Esophagus muscularis mucosa (tissue), 4 donors: ENCODE measurements at regions of chr15 and their contacts with region 1.

Region 1: GRCh38 chr15:97759363-97759762 is 201.1 kb upstream of the ARRDC4 start:
- DNase-seq: no peak
- H3K4me3 ChIP-seq: no peak overlapping the region
- H3K27ac ChIP-seq: no peak overlapping the region
- H3K4me1 ChIP-seq: peaks cover 0 to 17% (median 13%) of the 10 kb centered on the region in 4 donors
- H3K27me3 ChIP-seq: no peaks in the 10 kb centered on the region
- CTCF ChIP-seq: no peak
- EP300 ChIP-seq: no peak
- POLR2A ChIP-seq: no peak

Region 2: GRCh38 chr15:97248376-97248775 is 511.0 kb before region 1 on chr15:
- intact Hi-C with region 1: loop called (anchors 10 kb)
- DNase-seq: no peak
- H3K4me3 ChIP-seq: no peak overlapping the region
- H3K27ac ChIP-seq: no peak overlapping the region
- H3K4me1 ChIP-seq: no peaks in the 10 kb centered on the region
- H3K27me3 ChIP-seq: no peaks in the 10 kb centered on the region
- CTCF ChIP-seq: no peak
- EP300 ChIP-seq: no peak
- POLR2A ChIP-seq: no peak

Region 3: DNA sequence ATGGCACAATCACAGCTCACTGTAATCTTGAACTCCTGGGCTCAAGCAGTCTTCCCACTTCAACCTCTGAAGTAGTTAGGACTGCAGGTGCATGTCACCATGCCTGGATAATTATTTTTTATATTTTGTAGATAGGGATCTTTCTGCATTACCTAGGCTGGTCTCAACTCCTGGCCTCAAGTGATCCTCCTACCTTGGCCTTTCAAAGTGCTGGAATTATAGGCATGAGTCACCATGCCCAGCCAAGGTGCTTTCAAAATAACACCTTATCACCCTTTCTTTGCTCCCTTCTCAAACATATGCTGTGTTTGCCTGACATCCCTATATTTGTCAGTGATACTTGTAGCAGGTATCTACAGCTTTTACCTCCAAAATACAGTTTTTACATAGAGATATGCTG is 40.9 kb before region 1 on chr15:
- intact Hi-C with region 1: no loop called
- DNase-seq: no peak
- H3K4me3 ChIP-seq: no peak overlapping the region
- H3K27ac ChIP-seq: no peak overlapping the region
- H3K4me1 ChIP-seq: no peaks in the 10 kb centered on the region
- H3K27me3 ChIP-seq: no peaks in the 10 kb centered on the region
- CTCF ChIP-seq: no peak
- EP300 ChIP-seq: no peak
- POLR2A ChIP-seq: no peak

Region 4: GRCh38 chr15:97804955-97805354 is 45.6 kb after region 1 on chr15:
- intact Hi-C with region 1: no loop called
- DNase-seq: peak; percentile 55
- H3K4me3 ChIP-seq: no peak overlapping the region
- H3K27ac ChIP-seq: no peak overlapping the region
- H3K4me1 ChIP-seq: peaks cover 0 to 7% (median 0%) of the 10 kb centered on the region in 4 donors
- H3K27me3 ChIP-seq: no peaks in the 10 kb centered on the region
- CTCF ChIP-seq: peak in 1 of 3 experiments; percentile 11
- EP300 ChIP-seq: no peak
- POLR2A ChIP-seq: no peak